ENCODE measurements at regions of chr10 and their contacts with region 1.

Region 1: GRCh38 chr10:987870-988666 is at the start of gene GTPBP4:
- H3K4me3 Mint-ChIP-seq: peak within 1 kb of the TSS; percentile 91
- H3K27ac Mint-ChIP-seq: peak within 1 kb of the TSS; percentile 99
- H3K4me1 Mint-ChIP-seq: peaks cover 34% of the 10 kb centered on the region
- H3K27me3 Mint-ChIP-seq: no peaks in the 10 kb centered on the region

Region 2: GRCh38 chr10:839550-840205 is 148.4 kb before region 1 on chr10:
- intact Hi-C with region 1: loop called (anchors 10 kb)
- H3K4me3 Mint-ChIP-seq: no peak overlapping the region
- H3K27ac Mint-ChIP-seq: no peak overlapping the region
- H3K4me1 Mint-ChIP-seq: no peaks in the 10 kb centered on the region
- H3K27me3 Mint-ChIP-seq: no peaks in the 10 kb centered on the region

Region 3: GRCh38 chr10:931416-932318 is 56.4 kb before region 1 on chr10 and contains the start of gene LARP4B:
- intact Hi-C with region 1: loop called (anchors 1 kb)
- H3K4me3 Mint-ChIP-seq: peak within 1 kb of the TSS; percentile 94
- H3K27ac Mint-ChIP-seq: peak within 1 kb of the TSS; percentile 87
- H3K4me1 Mint-ChIP-seq: peaks cover 45% of the 10 kb centered on the region
- H3K27me3 Mint-ChIP-seq: no peaks in the 10 kb centered on the region

Region 4: GRCh38 chr10:1048732-1049424 is 60.8 kb after region 1 on chr10 and contains the start of gene IDI1:
- intact Hi-C with region 1: loop called (anchors 2 kb)
- H3K4me3 Mint-ChIP-seq: peak within 1 kb of the TSS; percentile 89
- H3K27ac Mint-ChIP-seq: peak within 1 kb of the TSS; percentile 99
- H3K4me1 Mint-ChIP-seq: peaks cover 58% of the 10 kb centered on the region
- H3K27me3 Mint-ChIP-seq: no peaks in the 10 kb centered on the region